HCT116 (cell line): ENCODE measurements at regions of chr1 and their contacts with region 1.

Region 1: GRCh38 chr1:162136760-162137159 is 67.3 kb downstream of the NOS1AP start:
- DNase-seq: peak; percentile 43
- ATAC-seq: peak; percentile 92
- H3K4me3 ChIP-seq: peak overlapping the region in 1 of 2 experiments; percentile 30; a peak in 2 of 4 replicates
- H3K27ac ChIP-seq: peak overlapping the region; percentile 60
- H3K4me1 ChIP-seq: peaks cover 67 to 83% of the 10 kb centered on the region in 2 experiments
- H3K27me3 ChIP-seq: no peaks in the 10 kb centered on the region
- CTCF ChIP-seq: no peak
- POLR2A ChIP-seq: no peak
- RAD21 ChIP-seq: 0 out of 2 replicates have a peak, but pooled peaks have one; percentile 21

Region 2: GRCh38 chr1:162069328-162070093 is 67.2 kb before region 1 on chr1 and contains the start of gene NOS1AP:
- CTCF ChIA-PET with region 1: no interaction called
- POLR2A ChIA-PET with region 1: no interaction called
- RAD21 ChIA-PET with region 1: no interaction called
- intact Hi-C with region 1: loop called (anchors 5 kb)
- DNase-seq: peak; percentile 35
- ATAC-seq: peak; percentile 93
- H3K4me3 ChIP-seq: peak within 1 kb of the TSS; percentile 54 to 68
- H3K27ac ChIP-seq: peak within 1 kb of the TSS; percentile 41; the same call in 1 of the 2 replicates
- H3K4me1 ChIP-seq: peaks cover 40 to 41% of the 10 kb centered on the region in 2 experiments
- H3K27me3 ChIP-seq: peaks cover 26% of the 10 kb centered on the region; the same call in 1 of the 2 replicates
- CTCF ChIP-seq: no peak
- POLR2A ChIP-seq: no peak
- RAD21 ChIP-seq: no peak
- total RNA-seq, gene NOS1AP: 5.3 TPM

Region 3: GRCh38 chr1:162256287-162256686 is 119.5 kb after region 1 on chr1:
- CTCF ChIA-PET with region 1: no interaction called
- POLR2A ChIA-PET with region 1: no interaction called
- RAD21 ChIA-PET with region 1: no interaction called
- intact Hi-C with region 1: no loop called
- DNase-seq: no peak
- ATAC-seq: no peak
- H3K4me3 ChIP-seq: no peak overlapping the region
- H3K27ac ChIP-seq: no peak overlapping the region
- H3K4me1 ChIP-seq: no peaks in the 10 kb centered on the region
- H3K27me3 ChIP-seq: no peaks in the 10 kb centered on the region
- CTCF ChIP-seq: no peak
- POLR2A ChIP-seq: no peak
- RAD21 ChIP-seq: no peak